Mucosa of descending colon (tissue), 3 donors: ENCODE measurements at regions of chr13 and their contacts with region 1.

Region 1: DNA sequence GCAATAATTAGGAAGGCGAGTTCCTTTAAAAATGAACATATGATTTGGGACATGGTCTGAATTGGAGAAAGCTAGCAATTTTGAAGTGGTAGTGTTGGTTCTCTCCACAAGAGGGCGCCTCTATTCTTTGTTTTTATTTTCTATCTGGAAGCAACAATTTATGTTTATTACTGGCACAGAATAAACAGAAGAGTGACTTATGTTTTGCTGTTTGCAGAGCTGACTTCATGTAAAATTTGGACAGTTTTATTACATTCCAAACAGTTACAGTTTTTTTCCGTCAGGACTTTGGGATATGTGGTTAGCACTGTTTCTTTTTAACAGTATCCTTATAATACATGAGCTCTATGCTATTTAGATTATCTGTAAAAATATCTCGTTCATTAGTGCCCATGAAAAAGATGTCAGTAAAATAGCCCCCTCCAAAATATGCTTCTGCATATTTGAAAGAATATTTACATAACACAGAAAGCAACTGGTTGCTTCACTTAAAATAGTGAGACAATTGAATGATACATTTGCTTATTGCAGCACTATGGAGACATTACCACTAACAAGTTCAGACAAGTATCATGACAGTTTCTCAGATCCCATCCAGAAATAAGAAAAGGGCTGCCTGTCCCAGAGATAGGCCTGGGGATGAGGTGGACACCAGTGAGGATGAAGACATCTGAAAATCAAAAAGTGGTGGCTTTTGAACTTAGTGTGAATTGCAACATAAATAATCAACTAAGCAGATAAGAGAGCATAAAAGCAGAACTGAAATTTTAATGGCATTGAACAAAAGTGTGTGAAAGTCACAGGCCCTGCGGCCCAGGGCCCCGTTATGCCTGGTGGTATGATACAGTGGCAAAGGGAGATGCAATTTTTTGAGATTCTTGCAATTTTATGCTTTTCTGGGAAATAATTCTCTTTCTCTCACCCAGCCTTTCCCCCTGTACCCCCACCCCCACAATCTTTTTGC is 32.3 kb upstream of the FGF9 start:
- DNase-seq: peak in 1 of 3 donors; percentile 74
- ATAC-seq: peak; percentile 67
- H3K4me3 ChIP-seq: no peak overlapping the region
- H3K4me1 ChIP-seq: peaks cover 10% of the 10 kb centered on the region
- CTCF ChIP-seq: peak; percentile 71

Region 2: GRCh38 chr13:21326155-21327031 is 312.2 kb before region 1 on chr13:
- intact Hi-C with region 1: no loop called
- DNase-seq: peak; percentile 15 to 60 (median 53)
- ATAC-seq: peak; percentile 82
- H3K4me3 ChIP-seq: no peak overlapping the region
- H3K4me1 ChIP-seq: no peaks in the 10 kb centered on the region
- CTCF ChIP-seq: no peak

Region 3: GRCh38 chr13:21670883-21671619 is 32.5 kb after region 1 on chr13 and contains the start of gene FGF9:
- intact Hi-C with region 1: loop called in 1 of 2 experiments (anchors 5 kb)
- DNase-seq: peak; percentile 89 to 90 (median 89)
- ATAC-seq: peak; percentile 83
- H3K4me3 ChIP-seq: peak within 1 kb of the TSS; percentile 11
- H3K4me1 ChIP-seq: peaks cover 39% of the 10 kb centered on the region
- CTCF ChIP-seq: no peak
- total RNA-seq, gene FGF9: 1.2 to 2.6 (median 2.3) TPM

Region 4: GRCh38 chr13:22278336-22278929 is 639.8 kb after region 1 on chr13:
- intact Hi-C with region 1: loop called (anchors 5 kb)
- DNase-seq: peak in 2 of 3 donors; percentile 59 to 90
- ATAC-seq: peak; percentile 62
- H3K4me3 ChIP-seq: no peak overlapping the region
- H3K4me1 ChIP-seq: no peaks in the 10 kb centered on the region
- CTCF ChIP-seq: no peak